ENCODE measurements at regions of chr12 and their contacts with region 1.

Region 1: GRCh38 chr12:39272871-39273770 is 169.8 kb downstream of the KIF21A start:
- DNase-seq: peak in 3 of 9 experiments; percentile 8 to 45 (median 44)
- ATAC-seq: no peak
- H3K4me3 ChIP-seq: no peak overlapping the region
- H3K4me3 Mint-ChIP-seq: no peak overlapping the region
- H3K27ac ChIP-seq: no peak overlapping the region
- H3K27ac Mint-ChIP-seq: no peak overlapping the region
- H3K4me1 ChIP-seq: no peaks in the 10 kb centered on the region
- H3K4me1 Mint-ChIP-seq: no peaks in the 10 kb centered on the region
- H3K27me3 ChIP-seq: no peaks in the 10 kb centered on the region
- H3K27me3 Mint-ChIP-seq: peaks cover 15% of the 10 kb centered on the region
- CTCF ChIP-seq: peak; percentile 63

Region 2: DNA sequence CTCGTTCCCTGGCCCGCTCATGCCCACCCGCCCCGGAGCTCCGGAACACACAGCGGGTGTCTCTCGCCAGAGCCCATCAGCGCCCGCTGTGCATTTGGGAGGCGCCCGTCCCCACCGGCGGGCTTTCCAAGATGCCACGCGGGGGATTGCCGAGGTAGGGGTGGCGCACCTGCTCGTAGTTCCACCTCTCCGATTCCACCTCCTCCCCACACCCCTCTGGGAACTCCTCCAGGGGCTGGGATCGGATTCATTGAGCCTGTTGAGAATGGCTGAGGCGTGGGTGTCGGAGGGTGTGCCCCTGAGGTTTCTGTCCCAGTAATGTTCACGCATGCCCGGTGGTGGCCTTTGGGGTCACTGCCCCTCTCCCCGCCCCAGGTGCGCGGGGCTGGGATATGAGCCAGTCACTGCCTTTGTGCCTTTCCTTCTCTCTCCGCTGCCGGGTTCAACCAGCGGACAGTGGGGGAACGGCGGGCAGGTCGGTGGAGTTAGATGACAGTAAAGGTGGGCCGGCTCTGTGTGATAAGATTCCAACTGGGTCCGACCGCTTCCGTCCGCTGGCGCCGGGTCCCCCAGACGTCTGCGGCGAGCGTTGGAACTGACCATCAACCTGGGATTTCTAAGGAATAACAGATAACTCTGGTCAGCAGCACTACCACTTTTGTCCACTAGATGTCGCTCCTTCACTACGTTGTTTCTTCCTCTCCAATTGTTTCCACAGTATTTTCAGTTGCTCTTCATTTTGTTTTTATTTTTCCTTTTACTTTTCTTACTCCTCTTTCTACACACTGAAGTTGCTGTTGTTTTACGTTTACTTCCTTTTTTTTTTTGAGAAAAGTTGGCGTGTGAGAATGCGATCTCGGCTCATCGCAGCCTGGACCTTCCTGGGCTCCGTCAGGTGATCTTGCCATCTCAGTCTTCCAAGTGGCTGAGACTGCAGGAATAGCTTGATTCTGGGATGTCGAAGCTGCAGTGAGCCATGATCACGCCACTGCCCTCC is 1134.6 kb before region 1 on chr12:
- CTCF ChIA-PET with region 1: interaction called, 5 read pairs
- POLR2A ChIA-PET with region 1: no interaction called
- intact Hi-C with region 1: loop called in 1 of 2 experiments (anchors 5 kb)
- DNase-seq: peak in 8 of 9 experiments; percentile 19 to 76 (median 62)
- ATAC-seq: peak; percentile 62
- H3K4me3 ChIP-seq: peak overlapping the region; percentile 29 to 36
- H3K4me3 Mint-ChIP-seq: peak overlapping the region; percentile 83
- H3K27ac ChIP-seq: no peak overlapping the region
- H3K27ac Mint-ChIP-seq: peak overlapping the region; percentile 41
- H3K4me1 ChIP-seq: peaks cover 5% of the 10 kb centered on the region
- H3K4me1 Mint-ChIP-seq: peaks cover 10% of the 10 kb centered on the region
- H3K27me3 ChIP-seq: no peaks in the 10 kb centered on the region
- H3K27me3 Mint-ChIP-seq: peaks cover 16% of the 10 kb centered on the region
- CTCF ChIP-seq: peak; percentile 98

Region 3: GRCh38 chr12:38332814-38333213 is 940.3 kb before region 1 on chr12:
- CTCF ChIA-PET with region 1: interaction called, 8 read pairs
- POLR2A ChIA-PET with region 1: no interaction called
- intact Hi-C with region 1: loop called in 1 of 2 experiments (anchors 2 kb)
- DNase-seq: no peak
- ATAC-seq: no peak
- H3K4me3 ChIP-seq: no peak overlapping the region
- H3K4me3 Mint-ChIP-seq: no peak overlapping the region
- H3K27ac ChIP-seq: no peak overlapping the region
- H3K27ac Mint-ChIP-seq: no peak overlapping the region
- H3K4me1 ChIP-seq: no peaks in the 10 kb centered on the region
- H3K4me1 Mint-ChIP-seq: peaks cover 2% of the 10 kb centered on the region
- H3K27me3 ChIP-seq: no peaks in the 10 kb centered on the region
- H3K27me3 Mint-ChIP-seq: no peaks in the 10 kb centered on the region
- CTCF ChIP-seq: no peak